ENCODE measurements at regions of chr6 and their contacts with region 1.

Region 1: GRCh38 chr6:25107218-25107617 is 171.5 kb upstream of the RIPOR2 start:
- DNase-seq: peak; percentile 82
- H3K4me3 ChIP-seq: no peak overlapping the region
- H3K27ac ChIP-seq: no peak overlapping the region
- H3K4me1 ChIP-seq: peaks cover 18% of the 10 kb centered on the region
- CTCF ChIP-seq: no peak

Region 2: DNA sequence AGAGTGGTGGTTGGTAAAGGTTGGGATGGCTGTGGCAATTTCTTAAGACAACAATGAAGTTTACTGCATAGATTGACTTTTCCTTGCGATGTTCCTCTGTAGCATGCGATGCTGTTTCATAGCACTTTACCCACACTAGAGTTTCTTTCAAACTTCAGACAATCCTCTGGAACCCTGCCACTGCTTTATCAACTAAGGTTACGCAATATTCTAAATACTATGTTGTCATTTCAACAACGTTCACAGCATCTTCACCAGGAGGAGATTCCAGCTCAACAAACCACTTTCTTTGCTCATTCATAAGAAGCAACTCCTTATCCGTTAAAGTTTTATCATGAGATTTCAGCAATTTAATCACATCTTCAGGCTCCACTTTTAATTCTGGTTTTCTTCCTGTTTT is 1142.4 kb before region 1 on chr6:
- CTCF ChIA-PET with region 1: no interaction called
- POLR2A ChIA-PET with region 1: no interaction called
- intact Hi-C with region 1: no loop called
- DNase-seq: no peak
- H3K4me3 ChIP-seq: no peak overlapping the region
- H3K27ac ChIP-seq: no peak overlapping the region
- H3K4me1 ChIP-seq: no peaks in the 10 kb centered on the region
- CTCF ChIP-seq: no peak

Region 3: GRCh38 chr6:24980507-24981387 is 126.5 kb before region 1 on chr6:
- CTCF ChIA-PET with region 1: no interaction called
- POLR2A ChIA-PET with region 1: no interaction called
- intact Hi-C with region 1: no loop called
- DNase-seq: no peak
- H3K4me3 ChIP-seq: no peak overlapping the region
- H3K27ac ChIP-seq: no peak overlapping the region
- H3K4me1 ChIP-seq: no peaks in the 10 kb centered on the region
- CTCF ChIP-seq: no peak

Region 4: GRCh38 chr6:25094726-25095125 is 12.5 kb before region 1 on chr6:
- CTCF ChIA-PET with region 1: no interaction called
- POLR2A ChIA-PET with region 1: interaction called, 10 read pairs
- intact Hi-C with region 1: no loop called
- DNase-seq: no peak
- H3K4me3 ChIP-seq: no peak overlapping the region
- H3K27ac ChIP-seq: no peak overlapping the region
- H3K4me1 ChIP-seq: no peaks in the 10 kb centered on the region
- CTCF ChIP-seq: no peak

Region 5: DNA sequence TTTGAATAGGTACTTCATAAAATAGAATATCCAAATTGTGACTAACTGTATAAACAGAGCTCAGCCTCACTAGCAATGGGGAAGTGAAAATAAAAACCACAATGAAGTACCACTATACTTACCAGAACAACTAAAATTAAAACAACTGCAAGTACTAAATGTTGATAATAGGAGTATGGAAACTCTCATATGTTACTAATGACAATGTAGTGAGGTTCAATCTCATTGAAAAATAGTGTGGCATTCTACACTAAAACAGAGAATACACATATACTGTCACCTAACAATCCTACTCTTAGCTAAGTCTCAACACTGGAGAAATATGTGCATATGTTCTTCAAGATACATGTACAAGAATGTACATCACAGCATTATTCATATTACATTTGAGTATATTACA is 40.0 kb after region 1 on chr6:
- CTCF ChIA-PET with region 1: no interaction called
- POLR2A ChIA-PET with region 1: no interaction called
- intact Hi-C with region 1: no loop called
- DNase-seq: peak; percentile 64
- H3K4me3 ChIP-seq: peak overlapping the region; percentile 16
- H3K27ac ChIP-seq: peak overlapping the region; percentile 66
- H3K4me1 ChIP-seq: peaks cover 17% of the 10 kb centered on the region
- CTCF ChIP-seq: no peak